ENCODE measurements at regions of chr3 and their contacts with region 1.

Region 1: DNA sequence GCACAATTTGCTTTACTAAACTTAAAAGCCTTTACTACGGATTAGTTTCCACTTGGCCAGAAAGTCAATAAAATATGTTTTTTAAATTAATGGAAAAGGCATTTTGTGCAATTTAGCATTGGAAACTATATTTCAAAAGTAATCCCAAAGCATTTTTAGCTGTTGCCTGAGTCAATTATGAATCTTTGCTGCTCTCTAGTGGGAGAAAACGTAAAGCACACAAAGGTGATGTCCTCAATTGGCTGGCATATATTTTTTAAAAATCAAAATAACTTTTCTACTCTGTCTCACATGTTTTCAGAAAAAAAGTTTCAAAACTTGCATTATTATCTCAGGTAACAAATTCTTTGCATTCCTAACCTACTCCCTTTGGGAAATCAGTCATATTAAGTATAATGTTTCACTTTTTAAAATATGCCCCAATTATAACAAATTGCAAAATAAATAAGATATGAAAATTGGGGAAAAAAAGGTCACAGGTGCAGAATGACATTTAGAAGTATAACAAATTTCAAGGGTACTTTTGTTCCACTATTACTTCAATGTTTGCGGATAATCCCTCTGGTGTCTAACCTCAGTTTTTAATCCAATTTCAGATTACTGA is 47.2 kb upstream of the TEX55 start:
- DNase-seq: no peak
- ATAC-seq: no peak

Region 2: GRCh38 chr3:118884748-118885206 is 213.9 kb before region 1 on chr3:
- intact Hi-C with region 1: loop called (anchors 5 kb)
- DNase-seq: peak; percentile 87
- ATAC-seq: peak; percentile 78

Region 3: DNA sequence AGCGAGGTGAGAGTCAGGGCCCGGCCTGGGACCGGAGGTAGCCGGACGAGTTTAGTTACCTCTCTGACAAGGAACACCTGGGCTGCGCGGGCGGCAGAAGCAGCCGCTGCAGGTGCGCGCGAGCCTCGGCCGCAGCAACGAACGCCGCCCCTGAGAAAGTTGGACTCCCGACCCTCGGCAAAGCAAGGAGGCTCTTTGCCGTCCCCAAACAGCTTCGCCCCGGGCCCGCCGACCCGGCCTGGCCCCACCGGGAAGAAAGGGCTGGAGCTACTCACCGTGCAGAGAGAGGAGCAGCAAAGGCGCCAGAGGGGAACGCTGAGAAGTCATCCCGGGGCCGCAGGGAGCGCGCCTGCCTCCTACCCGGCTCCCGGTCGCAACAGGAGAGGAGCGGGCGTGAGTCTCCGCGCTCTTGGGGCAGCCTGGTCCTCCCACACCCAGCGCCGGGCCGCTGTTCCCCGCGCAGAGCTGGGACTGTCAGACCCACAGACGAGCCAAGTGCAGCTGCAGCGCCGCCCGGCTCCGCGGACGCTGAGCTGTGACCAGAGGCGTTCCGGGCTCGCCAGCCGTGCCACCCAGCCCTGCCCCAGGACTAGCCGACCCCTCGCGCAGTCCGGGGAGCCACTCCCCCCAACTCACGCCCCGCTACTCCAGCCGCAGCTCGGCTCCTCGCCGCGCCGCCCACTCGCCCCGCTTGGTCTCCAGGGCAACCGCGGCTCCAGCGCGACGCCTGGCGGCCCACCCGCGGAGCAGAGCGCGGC is 64.3 kb before region 1 on chr3 and contains the start of gene IGSF11:
- intact Hi-C with region 1: loop called (anchors 10 kb)
- DNase-seq: peak; percentile 85
- ATAC-seq: peak; percentile 96
- total RNA-seq, gene IGSF11: 19.8 TPM

Region 4: DNA sequence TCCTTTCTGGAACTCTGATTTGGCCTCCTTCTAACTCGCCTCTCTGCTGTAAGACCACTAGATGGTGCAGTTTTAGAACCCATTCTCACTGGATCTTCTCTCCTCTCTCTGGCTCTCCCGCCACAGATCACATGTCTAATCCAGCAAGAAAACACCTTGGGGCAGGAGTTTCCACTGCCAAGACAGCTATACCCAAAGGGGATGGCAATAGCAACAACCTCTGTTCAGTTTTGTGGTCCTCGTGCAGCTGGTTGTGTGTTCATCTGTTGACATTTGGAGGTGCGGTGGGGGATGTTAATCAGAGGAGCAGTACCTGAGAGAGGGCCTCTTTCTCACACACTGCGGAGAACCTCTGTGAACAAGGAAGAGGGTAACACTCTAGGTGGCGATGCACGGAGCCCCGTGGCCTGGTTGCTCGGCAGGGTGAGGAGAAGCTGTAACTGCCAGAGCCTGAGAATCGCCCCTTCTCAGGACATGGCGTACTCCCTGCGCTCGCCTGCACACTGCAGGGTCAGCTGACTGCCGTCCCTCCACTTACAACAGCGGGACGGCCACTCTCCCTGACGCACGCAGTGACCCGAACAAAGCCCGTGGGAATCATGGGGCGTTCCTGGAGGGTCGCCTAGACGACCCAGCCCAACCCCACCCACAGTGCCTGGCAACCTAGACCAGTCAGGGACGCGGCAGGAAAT is 46.9 kb after region 1 on chr3 and contains the start of gene TEX55:
- intact Hi-C with region 1: no loop called
- DNase-seq: no peak
- ATAC-seq: peak; percentile 72
- total RNA-seq, gene TEX55: not detected